HCT116 (cell line): ENCODE measurements at regions of chr3 and their contacts with region 1.

Region 1: DNA sequence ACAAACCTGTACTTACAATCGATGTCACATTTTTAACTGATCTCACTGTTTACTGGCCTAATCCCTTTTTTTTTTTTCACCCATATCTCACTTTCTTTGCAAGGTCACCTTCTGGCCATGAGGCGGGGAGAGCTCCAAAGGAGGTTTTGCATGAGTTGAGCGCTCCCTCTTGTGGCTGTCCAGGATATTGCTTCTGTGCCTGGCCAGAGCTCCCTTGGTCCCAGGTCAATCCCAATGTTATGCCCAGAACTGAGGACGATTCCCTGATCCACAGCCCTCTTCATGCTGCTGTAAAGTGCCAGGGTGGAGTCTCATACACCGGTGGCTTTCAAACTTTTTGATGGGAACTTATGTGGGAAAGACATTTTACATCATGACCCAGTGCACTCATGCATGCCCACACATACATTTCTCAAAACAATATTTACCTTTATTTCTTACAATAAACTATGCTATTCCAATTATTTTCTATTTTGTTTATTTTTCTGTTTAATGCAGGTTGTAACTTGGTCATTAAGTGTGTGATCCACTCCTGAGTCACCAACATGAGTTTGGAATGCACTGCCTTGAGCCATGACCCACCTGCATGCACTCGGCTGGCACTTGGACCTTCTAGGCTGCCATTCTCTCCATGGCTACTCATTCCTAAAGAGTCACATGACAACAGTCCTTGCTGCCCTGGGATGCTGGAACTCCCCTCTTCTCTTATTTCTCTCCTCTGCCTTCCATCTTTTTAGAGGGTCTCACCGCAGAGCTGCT is 9.6 kb upstream of the SST start:
- DNase-seq: peak; percentile 64
- ATAC-seq: peak; percentile 94
- H3K4me3 ChIP-seq: no peak overlapping the region
- H3K27ac ChIP-seq: no peak overlapping the region
- H3K4me1 ChIP-seq: no peaks in the 10 kb centered on the region
- H3K27me3 ChIP-seq: peaks cover 11% of the 10 kb centered on the region
- CTCF ChIP-seq: peak; percentile 85 to 92 (median 90)
- POLR2A ChIP-seq: no peak
- RAD21 ChIP-seq: peak; percentile 92

Region 2: GRCh38 chr3:187112934-187113793 is 566.7 kb before region 1 on chr3:
- CTCF ChIA-PET with region 1: interaction called, 13 read pairs
- POLR2A ChIA-PET with region 1: no interaction called
- RAD21 ChIA-PET with region 1: no interaction called
- intact Hi-C with region 1: loop called (anchors 10 kb)
- DNase-seq: peak; percentile 18
- ATAC-seq: peak; percentile 87
- H3K4me3 ChIP-seq: no peak overlapping the region
- H3K27ac ChIP-seq: no peak overlapping the region
- H3K4me1 ChIP-seq: no peaks in the 10 kb centered on the region
- H3K27me3 ChIP-seq: 0 out of 2 replicates have a peak, but pooled peaks cover 6% of the 10 kb centered on the region
- CTCF ChIP-seq: peak; percentile 36 to 76 (median 64)
- POLR2A ChIP-seq: no peak
- RAD21 ChIP-seq: peak; percentile 75

Region 3: DNA sequence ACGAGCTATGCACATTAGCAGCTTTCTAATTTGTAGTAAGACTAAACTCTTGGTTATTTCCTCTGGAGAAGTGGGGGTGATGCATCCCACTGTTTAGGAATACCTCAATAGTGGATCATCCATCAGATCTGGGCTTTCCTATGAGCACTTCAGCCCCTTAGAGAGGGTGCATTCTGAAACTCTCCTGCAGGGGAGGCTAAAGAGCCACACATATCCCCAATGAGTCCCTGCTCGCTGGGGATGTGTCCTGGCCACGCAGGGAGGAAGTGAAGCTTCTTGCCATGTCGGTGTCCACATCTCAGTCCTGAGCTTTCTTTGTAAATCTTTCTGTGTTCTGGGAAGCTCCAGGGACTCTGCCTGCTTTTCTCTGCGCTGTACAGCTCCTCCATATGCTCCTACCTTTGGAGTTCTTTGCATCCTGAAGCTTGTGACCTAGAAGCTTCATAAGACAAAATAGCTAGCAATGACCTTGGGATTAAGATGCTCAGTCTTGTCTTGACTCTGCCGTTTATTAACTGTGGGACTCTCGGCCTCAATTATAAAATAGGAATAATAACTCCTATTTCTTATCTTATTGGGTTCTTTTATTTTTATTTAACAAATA is 360.0 kb before region 1 on chr3:
- CTCF ChIA-PET with region 1: interaction called, 472 read pairs
- POLR2A ChIA-PET with region 1: interaction called, 14 read pairs
- RAD21 ChIA-PET with region 1: interaction called, 48 to 64 read pairs
- intact Hi-C with region 1: loop called (anchors 1 kb)
- DNase-seq: peak; percentile 65
- ATAC-seq: peak; percentile 92
- H3K4me3 ChIP-seq: peak overlapping the region in 1 of 2 experiments; percentile 32; a peak in 3 of 4 replicates
- H3K27ac ChIP-seq: no peak overlapping the region
- H3K4me1 ChIP-seq: peaks cover 0 to 11% of the 10 kb centered on the region in 2 experiments; a peak in 1 of 4 replicates
- H3K27me3 ChIP-seq: peaks cover 33% of the 10 kb centered on the region
- CTCF ChIP-seq: peak; percentile 84 to 92 (median 88)
- POLR2A ChIP-seq: no peak
- RAD21 ChIP-seq: peak; percentile 94

Region 4: DNA sequence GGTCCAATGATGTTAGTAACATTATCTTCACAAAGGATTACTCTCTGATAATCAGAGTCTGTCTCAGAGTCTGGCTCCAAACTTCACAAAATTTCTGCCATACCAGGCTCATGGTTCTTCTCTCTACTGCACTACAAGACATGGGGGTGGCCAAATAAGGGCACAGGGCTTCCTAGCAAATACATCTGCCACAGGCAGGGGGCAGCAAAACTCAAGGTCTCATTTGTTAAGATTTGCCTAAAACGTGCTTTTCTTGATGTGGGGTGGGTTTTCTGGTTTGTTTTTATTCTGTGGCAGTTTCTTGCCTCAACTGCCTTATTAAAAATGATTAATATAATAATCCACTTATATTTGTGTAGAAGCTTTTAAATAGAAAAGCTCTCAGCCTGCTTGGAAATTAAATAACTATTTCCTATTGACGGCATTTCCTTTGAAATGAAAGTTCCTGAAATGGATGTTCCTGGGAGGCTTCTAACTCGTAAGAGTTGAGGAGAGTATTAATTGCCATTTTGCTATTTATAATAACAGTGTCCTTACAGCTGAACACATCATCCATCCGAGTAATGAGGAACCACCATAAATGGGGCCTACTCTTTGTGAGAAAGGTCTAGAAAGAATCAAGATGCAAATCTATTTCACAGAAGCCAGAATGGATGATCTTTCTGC is 63.4 kb before region 1 on chr3:
- CTCF ChIA-PET with region 1: interaction called, 42 read pairs
- POLR2A ChIA-PET with region 1: no interaction called
- RAD21 ChIA-PET with region 1: interaction called, 3 to 5 read pairs
- intact Hi-C with region 1: loop called (anchors 1 kb)
- DNase-seq: peak; percentile 46
- ATAC-seq: peak; percentile 91
- H3K4me3 ChIP-seq: no peak overlapping the region
- H3K27ac ChIP-seq: no peak overlapping the region
- H3K4me1 ChIP-seq: no peaks in the 10 kb centered on the region
- H3K27me3 ChIP-seq: peaks cover 24% of the 10 kb centered on the region
- CTCF ChIP-seq: peak; percentile 70 to 82 (median 80); a peak in 5 of 6 replicates
- POLR2A ChIP-seq: no peak
- RAD21 ChIP-seq: peak; percentile 68

Region 5: DNA sequence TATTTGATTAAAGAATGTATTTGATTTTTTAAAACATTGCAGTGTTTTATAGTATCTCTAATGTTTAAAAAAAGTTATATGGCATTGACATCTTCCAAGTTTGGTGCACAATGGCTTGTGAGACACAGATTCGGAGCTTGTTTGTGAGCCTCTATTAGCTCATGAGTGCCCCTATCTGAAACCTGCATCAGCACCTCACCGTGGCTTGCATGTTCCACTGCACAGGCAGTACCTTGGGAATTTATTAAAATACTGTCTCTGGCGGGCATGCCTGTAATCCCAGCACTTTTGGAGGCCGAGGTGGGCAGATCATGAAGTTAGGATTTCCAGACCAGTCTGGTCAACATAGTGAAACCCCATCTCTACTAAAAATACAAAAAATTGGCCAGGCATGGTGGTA is 29.3 kb after region 1 on chr3:
- CTCF ChIA-PET with region 1: interaction called, 26 read pairs
- POLR2A ChIA-PET with region 1: no interaction called
- RAD21 ChIA-PET with region 1: interaction called in 1 of 2 experiments, 4 read pairs
- intact Hi-C with region 1: loop called (anchors 1 kb)
- DNase-seq: peak; percentile 31
- ATAC-seq: peak; percentile 98
- H3K4me3 ChIP-seq: no peak overlapping the region
- H3K27ac ChIP-seq: no peak overlapping the region
- H3K4me1 ChIP-seq: peaks cover 0 to 5% of the 10 kb centered on the region in 2 experiments; a peak in 2 of 4 replicates
- H3K27me3 ChIP-seq: no peaks in the 10 kb centered on the region
- CTCF ChIP-seq: peak; percentile 52 to 68 (median 65); a peak in 5 of 6 replicates
- POLR2A ChIP-seq: no peak
- RAD21 ChIP-seq: peak; percentile 29; the same call in 1 of the 2 replicates

Region 6: DNA sequence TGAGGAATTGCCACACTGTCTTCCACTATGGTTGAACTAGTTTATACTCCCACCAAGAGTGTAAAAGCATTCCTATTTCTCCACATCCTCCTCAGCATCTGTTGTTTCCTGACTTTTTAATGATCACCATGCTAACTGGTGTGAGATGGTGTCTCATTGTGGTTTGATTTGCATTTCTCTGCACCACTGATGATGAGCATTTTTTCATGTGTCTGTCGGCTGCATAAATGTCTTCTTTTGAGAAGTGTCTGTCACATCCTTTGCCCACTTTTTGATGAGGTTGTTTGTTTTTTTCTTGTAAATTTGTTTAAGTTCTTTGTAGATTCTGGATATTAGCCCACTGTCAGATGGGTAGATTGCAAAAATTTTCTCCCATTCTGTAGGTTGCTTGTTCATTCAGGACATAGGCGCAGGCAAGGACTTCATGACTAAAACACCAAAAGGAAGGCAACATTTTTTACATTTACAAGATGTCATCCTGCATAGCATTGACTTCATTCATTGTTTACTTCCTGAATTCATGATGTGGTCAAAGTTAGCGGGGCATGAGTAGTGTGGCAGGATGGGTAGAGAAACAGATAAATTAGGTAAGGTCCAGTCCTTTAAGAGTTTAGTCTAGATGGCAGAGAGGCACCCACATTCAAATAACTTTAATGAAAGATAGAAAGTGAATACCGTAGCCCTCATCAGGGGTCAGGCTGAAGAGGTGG is 429.0 kb after region 1 on chr3:
- CTCF ChIA-PET with region 1: no interaction called
- POLR2A ChIA-PET with region 1: no interaction called
- RAD21 ChIA-PET with region 1: no interaction called
- intact Hi-C with region 1: no loop called
- DNase-seq: no peak
- ATAC-seq: no peak
- H3K4me3 ChIP-seq: no peak overlapping the region
- H3K27ac ChIP-seq: no peak overlapping the region
- H3K4me1 ChIP-seq: no peaks in the 10 kb centered on the region
- H3K27me3 ChIP-seq: no peaks in the 10 kb centered on the region; the same call in 1 of the 2 replicates
- CTCF ChIP-seq: no peak
- POLR2A ChIP-seq: no peak
- RAD21 ChIP-seq: no peak